ENCODE measurements at regions of chrX and their contacts with region 1.

Region 1: GRCh38 chrX:67718926-67719325 is 175.1 kb downstream of the AR start:
- DNase-seq: peak in 4 of 5 donors; percentile 33 to 53 (median 45)
- ATAC-seq: peak; percentile 90 to 95 (median 94)
- H3K4me3 ChIP-seq: no peak overlapping the region
- H3K27ac ChIP-seq: peak overlapping the region in 5 of 12 donors; percentile 1 to 75 (median 31)
- H3K4me1 ChIP-seq: peaks cover 0 to 38% (median 10%) of the 10 kb centered on the region in 12 donors
- H3K27me3 ChIP-seq: no peaks in the 10 kb centered on the region
- CTCF ChIP-seq: peak in 5 of 12 donors; percentile 5 to 40 (median 11)
- POLR2A ChIP-seq: no peak

Region 2: DNA sequence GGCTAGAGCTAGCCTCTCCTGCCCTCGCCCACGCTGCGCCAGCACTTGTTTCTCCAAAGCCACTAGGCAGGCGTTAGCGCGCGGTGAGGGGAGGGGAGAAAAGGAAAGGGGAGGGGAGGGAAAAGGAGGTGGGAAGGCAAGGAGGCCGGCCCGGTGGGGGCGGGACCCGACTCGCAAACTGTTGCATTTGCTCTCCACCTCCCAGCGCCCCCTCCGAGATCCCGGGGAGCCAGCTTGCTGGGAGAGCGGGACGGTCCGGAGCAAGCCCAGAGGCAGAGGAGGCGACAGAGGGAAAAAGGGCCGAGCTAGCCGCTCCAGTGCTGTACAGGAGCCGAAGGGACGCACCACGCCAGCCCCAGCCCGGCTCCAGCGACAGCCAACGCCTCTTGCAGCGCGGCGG is 175.1 kb before region 1 on chrX and contains the start of gene AR:
- intact Hi-C with region 1: loop called in 3 of 10 experiments (anchors 2 to 5 kb)
- DNase-seq: peak; percentile 66 to 81 (median 76)
- ATAC-seq: peak; percentile 52 to 82 (median 74)
- H3K4me3 ChIP-seq: peak within 1 kb of the TSS; percentile 3 to 63 (median 54)
- H3K27ac ChIP-seq: peak within 1 kb of the TSS in 10 of 12 donors; percentile 43 to 79 (median 66)
- H3K4me1 ChIP-seq: peaks cover 0 to 5% (median 0%) of the 10 kb centered on the region in 12 donors
- H3K27me3 ChIP-seq: peaks cover 0 to 57% (median 0%) of the 10 kb centered on the region in 9 donors
- CTCF ChIP-seq: no peak
- POLR2A ChIP-seq: peak in 1 of 2 donors; percentile 30
- total RNA-seq, gene AR: 9.5 to 30.1 (median 20.1) TPM

Region 3: GRCh38 chrX:67555578-67556203 is 163.2 kb before region 1 on chrX:
- intact Hi-C with region 1: loop called in 3 of 10 experiments (anchors 5 to 10 kb)
- DNase-seq: peak in 1 of 5 donors; percentile 14
- ATAC-seq: peak in 3 of 4 donors; percentile 32 to 42 (median 36)
- H3K4me3 ChIP-seq: no peak overlapping the region
- H3K27ac ChIP-seq: no peak overlapping the region
- H3K4me1 ChIP-seq: peaks cover 0 to 4% (median 0%) of the 10 kb centered on the region in 12 donors
- H3K27me3 ChIP-seq: peaks cover 0 to 3% (median 0%) of the 10 kb centered on the region in 9 donors
- CTCF ChIP-seq: peak; percentile 39 to 77 (median 62)
- POLR2A ChIP-seq: no peak

Region 4: DNA sequence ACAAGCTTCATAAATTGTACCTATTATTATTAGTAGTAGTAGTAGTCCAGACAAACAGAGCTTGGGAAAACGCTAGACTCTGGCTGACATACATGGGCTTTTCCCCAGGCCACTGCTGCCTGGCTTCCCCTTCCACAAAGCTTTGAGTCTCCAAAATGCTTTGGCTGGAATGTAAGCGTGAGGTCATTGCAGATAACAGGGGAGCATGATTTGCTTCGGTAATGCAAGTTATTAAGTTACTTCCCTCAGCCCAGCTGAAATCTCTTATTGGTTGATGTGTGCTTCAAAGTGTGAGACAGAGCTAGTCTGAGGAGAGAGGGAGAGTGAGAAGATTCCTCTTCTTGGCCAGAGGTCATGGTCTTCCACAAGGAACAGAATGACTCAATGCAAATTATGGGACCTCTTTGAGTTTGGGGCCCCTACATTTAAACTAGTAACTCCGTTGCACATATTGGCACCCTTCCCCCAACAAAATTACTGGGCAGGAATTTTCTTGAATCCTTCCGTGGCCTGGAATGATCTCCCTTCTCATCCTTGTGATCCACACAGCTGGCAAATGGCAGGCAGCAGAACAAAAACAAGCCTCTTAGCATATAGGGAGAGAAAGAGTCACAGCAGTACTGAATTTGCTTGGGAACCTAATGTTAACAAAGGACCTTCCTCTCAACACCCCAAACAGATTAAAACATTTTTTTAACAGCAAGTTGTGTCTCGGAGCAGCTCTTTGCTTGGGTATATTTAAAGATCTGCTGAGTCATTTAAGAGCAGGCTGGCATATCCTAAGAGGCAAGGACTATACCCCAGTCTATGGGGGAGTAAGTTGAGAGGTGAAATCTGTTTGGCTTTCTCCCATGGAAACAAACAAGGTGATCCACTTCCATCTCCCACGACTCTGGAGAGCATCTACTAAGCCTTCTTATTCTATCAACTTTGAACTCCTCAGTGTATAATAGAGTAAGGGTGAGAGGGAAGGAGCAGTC is 155.2 kb before region 1 on chrX:
- intact Hi-C with region 1: loop called in 3 of 10 experiments (anchors 5 to 10 kb)
- DNase-seq: peak in 3 of 5 donors; percentile 23 to 39 (median 33)
- ATAC-seq: peak; percentile 69 to 93 (median 76)
- H3K4me3 ChIP-seq: no peak overlapping the region
- H3K27ac ChIP-seq: peak overlapping the region; percentile 22 to 90 (median 65)
- H3K4me1 ChIP-seq: peaks cover 0 to 15% (median 0%) of the 10 kb centered on the region in 12 donors
- H3K27me3 ChIP-seq: no peaks in the 10 kb centered on the region
- CTCF ChIP-seq: no peak
- POLR2A ChIP-seq: no peak

Region 5: GRCh38 chrX:67568769-67569168 is 150.2 kb before region 1 on chrX:
- intact Hi-C with region 1: loop called in 2 of 10 experiments (anchors 5 to 10 kb)
- DNase-seq: peak in 2 of 5 donors; percentile 43 to 56
- ATAC-seq: peak; percentile 61 to 85 (median 80)
- H3K4me3 ChIP-seq: peak overlapping the region in 2 of 12 donors; percentile 27 to 40
- H3K27ac ChIP-seq: peak overlapping the region in 5 of 12 donors; percentile 23 to 63 (median 26)
- H3K4me1 ChIP-seq: peaks cover 0 to 6% (median 0%) of the 10 kb centered on the region in 12 donors
- H3K27me3 ChIP-seq: no peaks in the 10 kb centered on the region
- CTCF ChIP-seq: no peak
- POLR2A ChIP-seq: no peak

Measured in heart left ventricle (tissue), 16 donors.